Prostate gland (tissue), 2 donors: ENCODE measurements at regions of chr2 and their contacts with region 1.

Region 1: DNA sequence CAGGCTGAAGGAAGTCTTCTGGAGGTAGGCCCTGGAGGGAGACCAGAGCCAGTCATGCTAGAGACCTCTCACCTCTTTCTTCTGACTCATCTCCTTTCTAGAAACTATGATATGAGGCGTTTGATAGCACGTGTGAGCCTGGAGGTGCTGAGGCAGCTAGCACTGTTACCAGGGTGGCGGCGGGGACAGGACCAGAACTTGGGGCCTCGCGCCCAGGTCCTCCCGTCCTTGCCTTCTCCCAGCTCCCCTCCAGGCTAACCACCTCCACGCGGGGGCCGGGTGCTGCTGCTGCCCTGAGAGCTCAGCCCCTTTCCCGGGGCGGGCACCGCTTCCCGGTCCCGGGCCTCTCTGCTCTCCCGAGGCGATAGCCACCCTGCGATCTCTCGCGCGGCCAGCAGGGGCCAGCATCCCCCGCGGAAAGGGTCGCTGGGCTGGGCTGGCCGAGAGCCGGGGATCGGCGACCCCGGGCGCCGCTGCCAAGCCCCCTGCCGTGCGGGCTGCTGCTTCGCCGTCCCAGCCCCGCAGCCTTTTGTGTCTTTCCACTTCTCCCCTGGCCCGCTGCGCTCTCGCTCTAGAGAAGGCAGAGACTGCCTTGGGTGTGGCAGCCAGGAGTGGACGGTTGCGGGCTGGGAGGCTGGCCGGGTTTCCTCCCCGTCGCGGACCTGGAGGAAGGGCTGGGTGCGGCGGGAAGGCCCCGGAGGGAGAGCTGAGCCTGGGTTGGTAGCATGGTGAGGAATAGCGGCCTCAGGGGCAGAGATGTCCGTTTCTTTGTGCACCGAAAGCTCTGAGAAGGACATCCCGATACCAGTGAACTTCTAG is 49.1 kb downstream of the TMEM17 start:
- DNase-seq: peak; percentile 45
- H3K4me3 ChIP-seq: peak overlapping the region; percentile 49 to 51
- H3K27ac ChIP-seq: peak overlapping the region; percentile 65 to 67
- H3K4me1 ChIP-seq: no peaks in the 10 kb centered on the region
- H3K27me3 ChIP-seq: no peaks in the 10 kb centered on the region
- CTCF ChIP-seq: peak; percentile 90 to 97 (median 96)
- POLR2A ChIP-seq: no peak

Region 2: GRCh38 chr2:62653582-62654422 is 196.9 kb after region 1 on chr2:
- intact Hi-C with region 1: no loop called
- DNase-seq: no peak
- H3K4me3 ChIP-seq: no peak overlapping the region
- H3K27ac ChIP-seq: no peak overlapping the region
- H3K4me1 ChIP-seq: no peaks in the 10 kb centered on the region
- H3K27me3 ChIP-seq: no peaks in the 10 kb centered on the region
- CTCF ChIP-seq: no peak
- POLR2A ChIP-seq: no peak

Region 3: DNA sequence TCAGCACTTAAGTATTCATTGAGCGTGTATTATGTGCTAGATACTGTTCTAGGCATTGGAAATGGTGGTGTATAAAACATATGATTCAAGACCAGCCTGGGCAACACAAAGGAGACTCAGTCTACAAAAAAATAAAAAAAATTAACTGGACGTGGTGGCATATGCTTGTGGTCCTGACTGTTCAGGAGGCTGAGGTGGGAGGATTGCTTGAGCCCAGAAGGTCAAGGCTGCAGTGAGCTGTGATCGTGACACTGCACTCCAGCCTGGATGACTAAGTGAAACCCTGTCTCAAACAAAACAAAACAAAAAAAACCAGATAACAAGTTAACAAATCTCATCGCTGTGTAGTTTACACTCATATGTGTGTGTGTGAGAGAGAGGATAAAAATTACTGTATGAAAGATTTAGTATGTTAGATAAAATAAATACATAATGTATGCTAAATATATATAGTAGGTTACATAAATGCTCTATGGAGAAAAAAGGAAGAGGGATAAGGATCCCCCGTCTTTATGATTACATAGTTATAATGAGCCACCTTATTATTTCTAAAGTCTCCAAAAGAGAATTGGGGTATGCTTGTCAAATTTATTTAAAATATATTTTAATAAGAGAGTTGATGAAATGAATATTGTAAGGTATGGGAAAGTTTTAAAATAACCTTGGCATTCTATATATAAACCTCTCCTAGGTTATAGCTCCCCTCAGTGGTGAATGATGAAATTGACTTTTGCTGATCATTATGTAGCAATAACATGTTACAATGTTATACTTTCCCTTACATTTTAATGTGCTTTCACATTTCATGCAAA is 317.8 kb after region 1 on chr2:
- intact Hi-C with region 1: loop called (anchors 2 kb)
- DNase-seq: peak; percentile 29
- H3K4me3 ChIP-seq: no peak overlapping the region
- H3K27ac ChIP-seq: no peak overlapping the region
- H3K4me1 ChIP-seq: no peaks in the 10 kb centered on the region
- H3K27me3 ChIP-seq: no peaks in the 10 kb centered on the region
- CTCF ChIP-seq: peak; percentile 52 to 85 (median 81)
- POLR2A ChIP-seq: no peak

Region 4: DNA sequence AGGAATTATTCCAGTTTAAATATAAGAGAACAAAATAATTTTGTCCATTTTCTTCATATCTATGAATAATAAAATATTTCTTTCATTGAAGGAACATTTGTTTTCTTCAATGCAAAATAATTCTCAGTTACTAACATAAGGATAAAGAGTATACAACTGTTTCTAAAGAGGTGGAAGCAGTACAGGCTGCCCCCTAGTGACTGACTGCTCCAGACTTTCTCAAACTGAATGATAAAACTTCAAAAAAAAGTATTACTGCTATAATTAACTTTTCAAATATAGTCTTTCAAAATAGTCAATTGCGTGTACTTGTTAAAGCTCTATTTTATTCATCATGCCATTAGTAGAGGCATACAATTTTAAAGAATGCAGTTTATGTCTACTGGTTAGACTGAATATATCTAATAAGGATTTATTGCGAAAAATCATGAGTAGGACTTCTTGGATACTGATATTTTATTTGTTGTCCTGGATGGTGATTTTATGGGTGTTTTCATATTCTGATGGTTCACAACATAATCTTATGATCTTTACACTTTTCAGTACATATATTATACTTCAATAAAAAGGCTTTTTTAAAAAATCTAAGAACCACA is 1031.3 kb after region 1 on chr2:
- intact Hi-C with region 1: loop called (anchors 10 kb)
- DNase-seq: no peak
- H3K4me3 ChIP-seq: no peak overlapping the region
- H3K27ac ChIP-seq: no peak overlapping the region
- H3K4me1 ChIP-seq: no peaks in the 10 kb centered on the region
- H3K27me3 ChIP-seq: no peaks in the 10 kb centered on the region
- CTCF ChIP-seq: peak in 3 of 4 experiments; percentile 42 to 56 (median 54)
- POLR2A ChIP-seq: no peak